ENCODE measurements at regions of chr1 and their contacts with region 1.

Region 1: GRCh38 chr1:109643385-109644230 is 12.3 kb upstream of the GSTM4 start:
- H3K4me3 Mint-ChIP-seq: no peak overlapping the region
- H3K27ac Mint-ChIP-seq: no peak overlapping the region
- H3K4me1 Mint-ChIP-seq: peaks cover 18% of the 10 kb centered on the region
- H3K27me3 Mint-ChIP-seq: peaks cover 5% of the 10 kb centered on the region

Region 2: DNA sequence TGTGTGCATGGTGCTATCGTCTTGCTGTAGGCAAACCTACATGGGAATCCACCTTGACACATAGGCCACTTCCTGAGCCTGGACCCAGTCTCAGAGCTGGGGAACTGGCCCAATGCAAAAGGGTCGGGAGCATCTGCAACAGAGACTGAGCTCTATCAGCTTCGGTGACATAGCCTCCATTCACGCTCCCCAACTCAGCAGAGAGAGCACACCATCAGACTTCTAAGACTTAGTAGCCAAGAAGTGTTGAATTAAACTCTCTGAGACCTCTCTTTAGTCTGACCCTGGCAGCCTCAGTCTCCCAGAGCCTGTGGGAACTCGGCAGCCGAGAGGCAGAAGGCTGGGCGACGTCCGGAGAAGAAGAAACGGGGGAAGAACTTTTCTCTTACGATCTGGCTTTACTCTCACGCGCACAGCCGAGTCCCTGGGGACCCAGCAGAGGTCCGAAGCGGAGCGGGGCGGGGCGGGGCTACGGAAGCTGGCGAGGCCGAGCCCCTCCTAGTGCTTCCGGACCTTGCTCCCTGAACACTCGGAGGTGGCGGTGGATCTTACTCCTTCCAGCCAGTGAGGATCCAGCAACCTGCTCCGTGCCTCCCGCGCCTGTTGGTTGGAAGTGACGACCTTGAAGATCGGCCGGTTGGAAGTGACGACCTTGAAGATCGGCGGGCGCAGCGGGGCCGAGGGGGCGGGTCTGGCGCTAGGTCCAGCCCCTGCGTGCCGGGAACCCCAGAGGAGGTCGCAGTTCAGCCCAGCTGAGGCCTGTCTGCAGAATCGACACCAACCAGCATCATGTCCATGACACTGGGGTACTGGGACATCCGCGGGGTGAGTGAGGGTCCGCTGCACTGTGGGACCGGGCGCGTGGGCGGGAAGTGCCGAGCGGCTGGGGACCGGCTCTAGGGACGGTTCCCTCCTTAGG is 12.3 kb after region 1 on chr1 and contains the start of gene GSTM4:
- intact Hi-C with region 1: no loop called
- H3K4me3 Mint-ChIP-seq: peak within 1 kb of the TSS; percentile 93
- H3K27ac Mint-ChIP-seq: peak within 1 kb of the TSS; percentile 93
- H3K4me1 Mint-ChIP-seq: peaks cover 60% of the 10 kb centered on the region
- H3K27me3 Mint-ChIP-seq: peaks cover 12% of the 10 kb centered on the region

Region 3: GRCh38 chr1:109687616-109688499 is 44.2 kb after region 1 on chr1 and contains the start of gene GSTM1:
- intact Hi-C with region 1: no loop called
- H3K4me3 Mint-ChIP-seq: peak within 1 kb of the TSS; percentile 78
- H3K27ac Mint-ChIP-seq: peak within 1 kb of the TSS; percentile 87
- H3K4me1 Mint-ChIP-seq: peaks cover 16% of the 10 kb centered on the region
- H3K27me3 Mint-ChIP-seq: peaks cover 3% of the 10 kb centered on the region

Region 4: DNA sequence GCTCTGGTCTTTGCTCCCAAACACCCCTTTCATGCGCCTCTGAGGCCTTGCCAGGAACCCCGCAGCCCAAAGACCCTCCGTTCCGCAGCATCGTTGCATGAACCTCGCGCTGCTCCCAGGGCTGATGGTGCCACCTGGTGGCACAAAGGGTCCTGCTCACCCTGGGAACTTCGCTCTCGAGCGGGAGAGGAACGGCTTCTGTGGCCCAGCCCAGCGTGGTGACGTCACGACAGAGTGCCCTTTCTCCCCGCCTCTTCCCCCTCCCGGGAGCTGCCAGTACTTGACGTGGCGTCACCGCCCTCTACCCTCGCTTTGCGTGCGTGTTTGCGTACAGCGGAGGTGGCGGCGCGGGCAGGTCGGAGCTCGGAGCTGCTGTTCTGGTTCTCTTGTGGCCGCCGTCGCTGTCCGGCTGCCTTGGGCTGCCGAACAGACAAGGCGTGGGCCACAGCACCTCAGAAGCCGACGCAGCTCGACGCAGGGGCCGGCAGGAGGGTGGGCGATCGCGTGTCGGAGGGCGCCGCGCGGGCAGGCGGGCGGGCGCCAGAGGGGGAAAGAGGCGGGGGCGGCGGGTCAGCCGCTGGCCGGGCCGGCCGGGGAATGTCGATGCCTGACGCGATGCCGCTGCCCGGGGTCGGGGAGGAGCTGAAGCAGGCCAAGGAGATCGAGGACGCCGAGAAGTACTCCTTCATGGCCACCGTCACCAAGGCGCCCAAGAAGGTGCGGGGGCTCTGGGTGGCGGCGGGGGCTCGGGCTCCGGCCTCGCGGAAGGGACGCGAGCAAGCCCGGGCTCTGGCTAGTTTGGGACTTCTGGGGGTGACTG is 341.1 kb after region 1 on chr1 and contains the start of gene AHCYL1:
- intact Hi-C with region 1: loop called (anchors 5 kb)
- H3K4me3 Mint-ChIP-seq: peak within 1 kb of the TSS; percentile 98
- H3K27ac Mint-ChIP-seq: peak within 1 kb of the TSS; percentile 99
- H3K4me1 Mint-ChIP-seq: peaks cover 35% of the 10 kb centered on the region
- H3K27me3 Mint-ChIP-seq: peaks cover 4% of the 10 kb centered on the region

Measured in dendritic cell treated with granulocyte-macrophage colony-stimulating factor and Interleukin-4, amounts not matched to agents 40 ng/mL and 50 ng/mL, for 4 days (primary cell).